H1 (cell line): ENCODE measurements at regions of chr15 and their contacts with region 1.

Region 1: GRCh38 chr15:45166834-45167630 is 20.7 kb downstream of the SHF start:
- DNase-seq: peak; percentile 84 to 90
- H3K4me3 ChIP-seq: peak overlapping the region; percentile 57 to 78 (median 60)
- H3K27ac ChIP-seq: peak overlapping the region; percentile 85
- H3K4me1 ChIP-seq: peaks cover 0 to 19% (median 15%) of the 10 kb centered on the region in 4 experiments; a peak in 5 of 7 replicates
- H3K27me3 ChIP-seq: no peaks in the 10 kb centered on the region
- CTCF ChIP-seq: peak; percentile 67 to 75 (median 74)
- EP300 ChIP-seq: peak in 1 of 2 experiments; percentile 16; a peak in 1 of 3 replicates
- POLR2A ChIP-seq: peak; percentile 46 to 75
- RAD21 ChIP-seq: peak; percentile 32 to 42

Region 2: GRCh38 chr15:45140557-45141250 is 26.3 kb before region 1 on chr15:
- CTCF ChIA-PET with region 1: interaction called, 28 read pairs
- POLR2A ChIA-PET with region 1: no interaction called
- DNase-seq: no peak
- H3K4me3 ChIP-seq: no peak overlapping the region
- H3K27ac ChIP-seq: no peak overlapping the region
- H3K4me1 ChIP-seq: peaks cover 0 to 4% (median 1%) of the 10 kb centered on the region in 4 experiments; a peak in 3 of 7 replicates
- H3K27me3 ChIP-seq: peaks cover 6 to 20% (median 13%) of the 10 kb centered on the region in 4 experiments
- CTCF ChIP-seq: no peak
- EP300 ChIP-seq: no peak
- POLR2A ChIP-seq: no peak
- RAD21 ChIP-seq: no peak

Region 3: GRCh38 chr15:45187894-45188830 is 21.1 kb after region 1 on chr15 and contains the start of gene SHF:
- CTCF ChIA-PET with region 1: interaction called, 1,117 read pairs
- POLR2A ChIA-PET with region 1: interaction called, 33 read pairs
- DNase-seq: peak in 1 of 2 experiments; percentile 77
- H3K4me3 ChIP-seq: peak within 1 kb of the TSS; percentile 61 to 93 (median 82)
- H3K27ac ChIP-seq: no peak within 1 kb of the TSS
- H3K4me1 ChIP-seq: peaks cover 5 to 22% (median 13%) of the 10 kb centered on the region in 4 experiments
- H3K27me3 ChIP-seq: peaks cover 0 to 19% (median 13%) of the 10 kb centered on the region in 4 experiments; a peak in 6 of 7 replicates
- CTCF ChIP-seq: no peak
- EP300 ChIP-seq: no peak
- POLR2A ChIP-seq: peak in 1 of 2 experiments; percentile 49; a peak in 1 of 3 replicates
- RAD21 ChIP-seq: no peak
- total RNA-seq, gene SHF: 23.9 and 26.7 TPM in 2 replicates

Region 4: DNA sequence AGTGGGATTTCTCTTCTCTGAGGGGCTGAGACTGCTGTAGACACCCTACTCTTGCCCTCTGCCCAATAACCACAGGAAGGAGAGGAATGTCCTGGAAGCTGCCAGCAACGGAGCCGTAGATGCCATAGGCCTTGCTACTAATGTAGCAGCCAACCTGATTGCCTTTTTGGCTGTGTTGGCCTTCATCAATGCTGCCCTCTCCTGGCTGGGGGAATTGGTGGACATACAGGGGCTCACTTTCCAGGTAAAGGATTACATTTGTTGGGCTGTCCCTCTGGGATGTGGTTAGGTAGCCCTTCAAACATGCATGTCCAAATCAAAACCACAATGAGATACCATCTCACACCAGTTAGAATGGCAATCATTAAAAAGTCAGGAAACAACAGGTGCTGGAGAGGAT is 101.1 kb after region 1 on chr15:
- CTCF ChIA-PET with region 1: interaction called, 19 read pairs
- POLR2A ChIA-PET with region 1: no interaction called
- DNase-seq: peak in 1 of 2 experiments; percentile 50
- H3K4me3 ChIP-seq: no peak overlapping the region
- H3K27ac ChIP-seq: no peak overlapping the region
- H3K4me1 ChIP-seq: no peaks in the 10 kb centered on the region
- H3K27me3 ChIP-seq: no peaks in the 10 kb centered on the region
- CTCF ChIP-seq: peak; percentile 65 to 73 (median 69)
- EP300 ChIP-seq: no peak
- POLR2A ChIP-seq: no peak
- RAD21 ChIP-seq: peak; percentile 64 to 70

Region 5: DNA sequence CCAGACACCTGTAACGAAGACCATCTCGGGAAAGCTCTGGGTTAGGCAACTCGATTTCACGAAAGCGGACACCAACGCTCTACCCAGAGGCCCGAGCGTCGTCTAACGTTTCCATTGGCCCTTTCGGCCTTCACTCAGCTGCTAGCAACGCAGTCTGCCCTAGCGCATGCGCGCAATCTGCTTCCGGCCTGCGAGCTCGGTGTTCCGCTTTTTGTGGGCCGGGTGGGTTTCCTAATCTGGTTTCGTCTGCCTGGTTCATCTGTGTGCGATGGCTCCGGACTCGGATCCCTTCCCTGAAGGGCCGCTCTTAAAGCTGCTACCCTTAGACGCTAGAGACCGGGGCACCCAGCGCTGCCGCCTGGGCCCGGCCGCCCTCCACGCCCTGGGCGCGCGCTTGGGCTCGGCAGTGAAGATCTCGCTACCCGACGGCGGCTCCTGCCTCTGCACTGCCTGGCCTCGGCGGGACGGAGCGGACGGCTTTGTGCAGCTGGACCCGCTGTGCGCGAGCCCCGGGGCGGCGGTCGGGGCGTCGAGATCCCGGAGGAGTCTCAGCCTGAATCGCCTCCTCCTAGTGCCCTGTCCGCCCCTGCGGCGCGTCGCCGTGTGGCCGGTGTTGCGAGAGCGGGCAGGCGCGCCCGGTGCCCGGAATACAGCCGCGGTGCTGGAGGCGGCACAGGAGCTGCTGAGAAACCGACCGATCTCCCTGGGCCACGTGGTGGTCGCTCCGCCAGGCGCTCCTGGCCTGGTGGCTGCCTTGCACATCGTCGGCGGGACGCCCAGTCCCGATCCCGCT is 235.3 kb after region 1 on chr15:
- CTCF ChIA-PET with region 1: interaction called, 21 read pairs
- POLR2A ChIA-PET with region 1: interaction called, 6 read pairs
- DNase-seq: peak; percentile 93 to 94
- H3K4me3 ChIP-seq: peak overlapping the region; percentile 81 to 99 (median 85)
- H3K27ac ChIP-seq: peak overlapping the region; percentile 88
- H3K4me1 ChIP-seq: peaks cover 0 to 7% (median 0%) of the 10 kb centered on the region in 4 experiments; a peak in 2 of 7 replicates
- H3K27me3 ChIP-seq: no peaks in the 10 kb centered on the region
- CTCF ChIP-seq: no peak
- EP300 ChIP-seq: no peak
- POLR2A ChIP-seq: peak in 1 of 2 experiments; percentile 75; a peak in 2 of 3 replicates
- RAD21 ChIP-seq: no peak